ENCODE measurements at regions of chr2 and their contacts with region 1.

Region 1: GRCh38 chr2:230335451-230335863 is 8.5 kb downstream of the SP140L start:
- DNase-seq: no peak
- H3K4me3 Mint-ChIP-seq: peak overlapping the region; percentile 61
- H3K27ac Mint-ChIP-seq: peak overlapping the region; percentile 81
- H3K4me1 Mint-ChIP-seq: peaks cover 66% of the 10 kb centered on the region
- H3K27me3 Mint-ChIP-seq: no peaks in the 10 kb centered on the region

Region 2: DNA sequence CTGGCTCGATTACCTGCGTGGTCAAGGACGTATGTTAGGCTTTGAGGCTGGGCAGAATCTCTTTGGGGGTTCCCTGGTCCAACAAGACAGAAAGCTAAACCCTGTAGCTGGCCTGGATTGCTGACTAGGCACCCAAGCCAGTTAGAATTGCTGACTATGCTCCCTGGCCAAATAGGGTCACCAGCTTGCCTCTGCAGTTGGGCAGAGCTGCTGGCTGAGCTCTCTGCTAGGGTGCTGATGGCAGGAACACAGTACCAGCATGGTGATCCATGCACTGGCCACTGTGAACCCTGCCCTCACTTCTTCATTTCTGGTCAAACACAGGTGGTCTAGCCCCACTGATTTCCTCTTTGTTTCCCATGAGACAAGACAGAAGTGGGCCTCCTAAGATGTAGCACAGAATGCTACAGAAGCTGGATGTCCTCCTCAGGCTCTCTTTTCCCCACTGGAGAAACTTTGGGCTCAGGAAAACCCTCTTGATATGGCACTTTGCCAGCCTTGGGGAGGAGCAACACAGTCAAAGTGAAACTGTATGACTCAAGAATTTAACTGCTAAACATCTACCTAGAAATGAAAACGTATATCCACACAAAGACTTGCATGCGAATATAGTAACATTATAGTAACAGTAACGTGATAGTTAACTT is 12.3 kb after region 1 on chr2:
- intact Hi-C with region 1: loop called (anchors 1 kb)
- DNase-seq: peak; percentile 32
- H3K4me3 Mint-ChIP-seq: peak overlapping the region; percentile 59
- H3K27ac Mint-ChIP-seq: peak overlapping the region; percentile 90
- H3K4me1 Mint-ChIP-seq: peaks cover 80% of the 10 kb centered on the region
- H3K27me3 Mint-ChIP-seq: no peaks in the 10 kb centered on the region

Region 3: DNA sequence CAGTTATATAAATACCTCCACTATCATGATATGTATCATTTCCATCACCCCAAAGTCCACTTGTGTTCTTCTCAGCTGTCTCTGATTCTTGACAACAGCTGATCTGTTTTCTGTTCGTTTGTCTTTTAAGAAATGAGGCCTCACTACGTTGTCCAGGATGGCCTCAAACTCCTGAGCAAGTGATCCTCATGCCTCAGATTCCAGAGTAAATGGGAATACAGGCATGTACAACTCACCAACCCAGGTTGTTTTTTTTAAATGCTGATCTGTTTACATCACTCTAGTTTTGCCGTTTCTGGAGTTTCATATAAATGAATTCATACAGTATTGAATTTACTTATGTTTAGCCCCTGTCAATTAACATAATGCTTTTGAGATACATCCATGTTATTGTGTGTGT is 41.6 kb after region 1 on chr2:
- intact Hi-C with region 1: no loop called
- DNase-seq: no peak
- H3K4me3 Mint-ChIP-seq: no peak overlapping the region
- H3K27ac Mint-ChIP-seq: no peak overlapping the region
- H3K4me1 Mint-ChIP-seq: peaks cover 14% of the 10 kb centered on the region
- H3K27me3 Mint-ChIP-seq: peaks cover 2% of the 10 kb centered on the region